ENCODE measurements at regions of chr5 and their contacts with region 1.

Region 1: DNA sequence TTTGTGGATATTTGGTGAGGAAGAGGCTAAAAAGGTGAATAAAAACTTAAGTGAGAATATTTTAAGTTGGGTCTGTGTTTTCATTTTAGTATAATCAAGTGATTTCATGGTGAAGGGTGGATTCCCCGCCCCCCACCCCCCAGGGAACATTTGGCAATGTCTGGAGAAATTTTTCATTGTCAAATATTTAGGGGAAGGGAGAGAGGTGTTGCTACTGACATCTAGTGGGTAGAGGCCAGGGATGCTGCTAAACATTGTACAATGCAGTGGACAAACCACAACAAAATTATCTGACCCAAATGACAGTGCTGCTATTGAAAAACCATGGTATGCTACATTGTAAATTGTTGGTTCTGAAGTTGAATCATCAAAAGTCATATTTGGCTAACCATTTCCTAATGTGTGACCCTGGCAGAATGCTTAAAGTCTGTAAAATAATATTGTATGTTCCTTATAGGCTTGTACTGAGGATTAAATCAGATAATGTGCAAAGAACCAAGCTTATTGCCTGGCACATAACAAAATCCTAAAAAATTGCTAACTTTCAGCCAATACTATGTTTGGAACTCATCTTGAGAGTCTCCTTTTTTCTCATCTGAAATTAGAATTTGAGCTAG is 5.6 kb downstream of the C5orf24 start:
- DNase-seq: no peak
- ATAC-seq: no peak
- H3K4me3 Mint-ChIP-seq: no peak overlapping the region
- H3K27ac Mint-ChIP-seq: peak overlapping the region; percentile 58; the same call in 1 of the 2 replicates
- H3K4me1 Mint-ChIP-seq: peaks cover 7% of the 10 kb centered on the region
- H3K27me3 Mint-ChIP-seq: no peaks in the 10 kb centered on the region
- CTCF ChIP-seq: no peak

Region 2: GRCh38 chr5:134626369-134627014 is 224.9 kb before region 1 on chr5:
- CTCF ChIA-PET with region 1: no interaction called
- POLR2A ChIA-PET with region 1: interaction called, 12 read pairs
- DNase-seq: no peak
- ATAC-seq: no peak
- H3K4me3 Mint-ChIP-seq: no peak overlapping the region
- H3K27ac Mint-ChIP-seq: peak overlapping the region; percentile 6; the same call in 1 of the 2 replicates
- H3K4me1 Mint-ChIP-seq: no peaks in the 10 kb centered on the region
- H3K27me3 Mint-ChIP-seq: no peaks in the 10 kb centered on the region
- CTCF ChIP-seq: no peak